A549 (cell line): ENCODE measurements at regions of chr17 and their contacts with region 1.

Region 1: DNA sequence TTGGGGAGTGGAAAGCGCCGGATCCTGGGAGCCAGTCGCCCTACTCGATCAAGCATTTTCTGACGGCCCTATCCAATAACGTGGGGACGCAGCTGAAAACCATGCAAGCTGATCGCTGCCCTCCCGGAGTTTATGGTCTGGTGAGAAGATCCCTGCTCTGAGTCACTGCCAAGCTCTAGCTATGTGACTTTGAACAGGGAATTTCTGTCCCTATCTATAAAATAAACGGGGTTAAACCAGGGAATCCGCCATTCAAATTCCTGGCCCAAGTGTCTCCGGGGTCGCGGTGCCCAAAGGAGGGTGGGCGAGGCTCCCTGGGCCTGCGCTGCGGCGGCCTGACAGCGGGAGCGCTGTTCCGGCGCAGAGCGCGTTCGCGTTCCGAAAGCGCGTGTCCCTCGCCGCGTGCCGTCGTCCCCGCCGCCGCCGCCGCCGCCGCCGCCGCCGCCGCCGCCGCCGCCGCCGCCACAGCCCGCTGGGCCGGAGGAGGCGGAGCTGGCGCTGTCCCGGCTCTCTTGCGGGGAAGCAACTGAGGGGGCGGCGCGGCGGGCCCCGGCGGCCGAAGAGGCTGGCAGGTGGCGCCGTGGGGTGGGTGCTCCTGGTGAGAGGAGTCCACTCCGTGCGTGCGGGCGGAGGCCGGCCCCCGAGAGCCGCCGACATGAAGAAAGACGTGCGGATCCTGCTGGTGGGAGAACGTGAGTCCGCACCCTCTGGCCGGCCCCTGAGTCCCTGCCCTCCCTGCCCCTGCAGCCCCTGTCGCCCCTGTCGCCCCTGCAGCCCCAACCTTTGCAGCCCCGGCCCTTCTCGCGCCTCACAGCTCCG is at the start of gene RHOT1:
- DNase-seq: peak; percentile 87
- ATAC-seq: peak; percentile 83 to 84
- H3K4me3 ChIP-seq: peak within 1 kb of the TSS; percentile 86
- H3K27ac ChIP-seq: peak within 1 kb of the TSS; percentile 81 to 96
- H3K4me1 ChIP-seq: peaks cover 16% of the 10 kb centered on the region
- CTCF ChIP-seq: peak; percentile 76
- EP300 ChIP-seq: 0 out of 5 replicates have a peak, but pooled peaks of 1 of the 2 experiments have one; percentile 20
- POLR2A ChIP-seq: peak; percentile 51
- RAD21 ChIP-seq: no peak
- polyA plus RNA-seq, gene RHOT1: 83.2 and 109 TPM in 2 replicates

Region 2: DNA sequence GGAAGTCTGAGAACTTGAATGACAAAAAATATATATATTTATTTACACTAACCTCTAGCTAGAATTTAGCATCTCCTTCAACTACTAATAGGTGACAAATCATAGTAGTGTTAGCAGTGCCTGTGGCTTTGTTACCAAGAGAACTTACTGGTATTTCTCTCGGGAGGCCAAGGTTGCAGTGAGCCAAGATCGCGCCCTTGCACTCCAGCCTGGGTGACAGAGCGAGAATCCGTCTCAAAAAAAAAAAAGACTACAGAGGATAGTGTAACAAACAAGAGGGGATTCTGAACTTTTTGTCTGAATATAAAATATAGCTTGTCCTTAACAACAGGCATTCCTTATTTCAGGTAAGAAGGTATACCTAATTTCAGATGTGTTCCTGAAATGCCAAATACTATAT is 206.7 kb before region 1 on chr17:
- CTCF ChIA-PET with region 1: no interaction called
- POLR2A ChIA-PET with region 1: no interaction called
- DNase-seq: no peak
- ATAC-seq: no peak
- H3K4me3 ChIP-seq: no peak overlapping the region
- H3K27ac ChIP-seq: no peak overlapping the region
- H3K4me1 ChIP-seq: peaks cover 6% of the 10 kb centered on the region; the same call in 2 of the 3 replicates
- CTCF ChIP-seq: no peak
- EP300 ChIP-seq: no peak
- POLR2A ChIP-seq: no peak
- RAD21 ChIP-seq: no peak

Region 3: DNA sequence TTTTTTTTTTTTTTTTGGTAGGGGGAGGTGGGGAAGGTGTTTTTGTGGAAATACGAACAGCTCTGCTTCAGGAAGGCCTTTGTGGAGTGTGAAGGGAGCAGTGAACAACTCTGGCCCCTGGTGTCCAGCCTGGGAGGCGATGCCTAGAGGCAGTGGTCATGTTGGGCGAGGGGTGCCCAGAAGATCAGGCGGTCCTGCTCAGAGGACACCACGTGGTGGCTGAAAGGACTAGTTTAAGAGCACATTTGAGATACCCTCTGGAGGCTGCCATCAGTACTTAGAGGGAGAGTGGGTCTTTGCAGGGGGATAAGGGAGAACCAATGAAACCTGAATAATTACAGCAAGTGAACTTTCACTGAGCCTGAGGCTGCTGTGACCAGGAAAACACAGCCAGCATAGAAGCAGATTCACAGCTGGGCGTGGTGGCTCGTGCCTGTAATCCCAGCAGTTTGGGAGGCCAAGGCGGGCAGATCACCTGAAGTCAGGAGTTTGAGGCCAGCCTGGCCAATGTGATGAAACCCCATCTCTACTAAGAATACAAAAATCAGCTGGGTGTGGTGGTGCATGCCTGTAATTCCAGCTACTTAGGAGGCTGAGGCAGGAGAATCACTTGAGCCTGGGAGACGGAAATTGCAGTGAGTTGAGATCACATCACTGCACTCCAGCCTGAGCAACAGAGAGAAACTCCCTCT is 39.9 kb before region 1 on chr17:
- CTCF ChIA-PET with region 1: interaction called, 4 read pairs
- POLR2A ChIA-PET with region 1: interaction called, 16 read pairs
- DNase-seq: no peak
- ATAC-seq: peak in 1 of 2 experiments; percentile 22; a peak in 2 of 6 replicates
- H3K4me3 ChIP-seq: no peak overlapping the region
- H3K27ac ChIP-seq: no peak overlapping the region
- H3K4me1 ChIP-seq: peaks cover 19% of the 10 kb centered on the region; the same call in 2 of the 3 replicates
- CTCF ChIP-seq: no peak
- EP300 ChIP-seq: no peak
- POLR2A ChIP-seq: no peak
- RAD21 ChIP-seq: no peak

Region 4: GRCh38 chr17:32111141-32111771 is 31.0 kb before region 1 on chr17:
- CTCF ChIA-PET with region 1: interaction called, 12 read pairs
- POLR2A ChIA-PET with region 1: no interaction called
- DNase-seq: peak in 1 of 2 experiments; percentile 68
- ATAC-seq: peak; percentile 75 to 87
- H3K4me3 ChIP-seq: no peak overlapping the region
- H3K27ac ChIP-seq: no peak overlapping the region
- H3K4me1 ChIP-seq: 0 out of 3 replicates have a peak, but pooled peaks cover 4% of the 10 kb centered on the region
- CTCF ChIP-seq: peak; percentile 28; the same call in 2 of the 3 replicates
- EP300 ChIP-seq: no peak
- POLR2A ChIP-seq: no peak
- RAD21 ChIP-seq: no peak

Region 5: GRCh38 chr17:32127158-32127897 is 14.9 kb before region 1 on chr17:
- CTCF ChIA-PET with region 1: interaction called, 70 read pairs
- POLR2A ChIA-PET with region 1: no interaction called
- DNase-seq: peak; percentile 75 to 87
- ATAC-seq: peak; percentile 94 to 96
- H3K4me3 ChIP-seq: peak overlapping the region; percentile 52
- H3K27ac ChIP-seq: peak overlapping the region; percentile 80 to 87
- H3K4me1 ChIP-seq: peaks cover 37% of the 10 kb centered on the region
- CTCF ChIP-seq: no peak
- EP300 ChIP-seq: no peak
- POLR2A ChIP-seq: peak; percentile 87
- RAD21 ChIP-seq: no peak

Region 6: DNA sequence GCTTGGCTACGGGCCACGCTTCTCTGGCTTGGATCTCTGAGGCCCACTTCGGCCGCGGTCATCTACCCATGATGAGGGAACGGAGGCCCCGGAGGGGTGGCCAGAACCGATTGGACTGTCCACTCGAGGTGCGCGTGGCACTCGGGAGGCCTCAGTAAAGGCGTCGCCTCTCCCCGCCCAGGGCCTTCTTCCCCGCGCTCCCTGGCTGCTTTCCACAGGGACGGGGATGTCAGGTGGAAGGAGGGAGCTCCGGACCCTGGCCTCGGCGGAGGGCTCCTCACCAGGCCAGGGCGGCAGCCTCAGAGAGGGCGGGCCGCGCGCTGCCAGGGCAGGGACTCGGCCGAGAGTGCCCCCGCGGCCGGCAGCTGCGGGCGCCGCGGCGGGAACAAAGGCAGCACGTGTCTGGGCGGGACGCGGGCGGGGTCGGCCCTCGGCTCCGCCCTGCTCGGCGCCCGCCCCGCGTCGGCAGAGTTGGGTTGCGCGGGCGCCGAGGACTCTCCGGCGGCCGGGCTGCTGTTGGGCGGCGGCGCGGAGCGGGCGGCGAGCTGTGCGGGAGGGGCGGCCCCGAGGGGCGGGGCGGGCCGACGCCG is 344.0 kb after region 1 on chr17:
- CTCF ChIA-PET with region 1: no interaction called
- POLR2A ChIA-PET with region 1: no interaction called
- DNase-seq: peak; percentile 76 to 77
- ATAC-seq: peak; percentile 65 to 82
- H3K4me3 ChIP-seq: peak overlapping the region; percentile 94
- H3K27ac ChIP-seq: peak overlapping the region; percentile 86 to 92
- H3K4me1 ChIP-seq: peaks cover 6% of the 10 kb centered on the region; the same call in 1 of the 3 replicates
- CTCF ChIP-seq: no peak
- EP300 ChIP-seq: no peak
- POLR2A ChIP-seq: no peak
- RAD21 ChIP-seq: no peak